ENCODE measurements at regions of chr16 and their contacts with region 1.

Region 1: GRCh38 chr16:22007509-22008214 is at the start of gene MOSMO:
- DNase-seq: peak; percentile 66 to 70
- H3K4me3 ChIP-seq: peak within 1 kb of the TSS; percentile 100
- H3K27ac ChIP-seq: peak within 1 kb of the TSS; percentile 54
- H3K4me1 ChIP-seq: peaks cover 26% of the 10 kb centered on the region
- H3K27me3 ChIP-seq: no peaks in the 10 kb centered on the region
- CTCF ChIP-seq: 0 out of 2 replicates have a peak, but pooled peaks have one; percentile 21
- total RNA-seq, gene MOSMO: 20.1 and 24.2 TPM in 2 replicates

Region 2: GRCh38 chr16:21611546-21612384 is 395.9 kb before region 1 on chr16:
- CTCF ChIA-PET with region 1: interaction called, 13 read pairs
- POLR2A ChIA-PET with region 1: no interaction called
- intact Hi-C with region 1: no loop called
- DNase-seq: peak; percentile 25 to 74
- H3K4me3 ChIP-seq: peak overlapping the region; percentile 20; the same call in 1 of the 2 replicates
- H3K27ac ChIP-seq: peak overlapping the region; percentile 81
- H3K4me1 ChIP-seq: peaks cover 74% of the 10 kb centered on the region
- H3K27me3 ChIP-seq: no peaks in the 10 kb centered on the region
- CTCF ChIP-seq: no peak

Region 3: DNA sequence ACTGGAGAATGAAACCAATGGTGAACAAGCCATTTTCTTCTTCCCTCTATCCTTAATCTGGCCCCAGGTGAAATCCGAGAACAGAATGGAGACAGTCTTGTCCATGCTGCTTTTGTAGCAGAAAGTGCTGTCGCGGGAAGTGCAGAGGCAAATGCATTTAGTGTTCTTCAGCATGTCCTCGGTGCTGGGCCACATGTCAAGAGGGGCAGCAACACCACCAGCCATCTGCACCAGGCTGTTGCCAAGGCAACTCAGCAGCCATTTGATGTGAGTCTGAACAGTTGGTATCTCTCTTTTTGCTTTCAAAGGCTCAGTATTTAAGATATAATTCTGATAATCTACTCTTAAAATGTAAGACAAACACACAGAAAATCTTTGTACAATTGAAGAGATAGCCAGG is 35.8 kb before region 1 on chr16:
- CTCF ChIA-PET with region 1: interaction called, 21 read pairs
- POLR2A ChIA-PET with region 1: no interaction called
- intact Hi-C with region 1: no loop called
- DNase-seq: no peak
- H3K4me3 ChIP-seq: no peak overlapping the region
- H3K27ac ChIP-seq: no peak overlapping the region
- H3K4me1 ChIP-seq: no peaks in the 10 kb centered on the region
- H3K27me3 ChIP-seq: no peaks in the 10 kb centered on the region
- CTCF ChIP-seq: no peak

Region 4: DNA sequence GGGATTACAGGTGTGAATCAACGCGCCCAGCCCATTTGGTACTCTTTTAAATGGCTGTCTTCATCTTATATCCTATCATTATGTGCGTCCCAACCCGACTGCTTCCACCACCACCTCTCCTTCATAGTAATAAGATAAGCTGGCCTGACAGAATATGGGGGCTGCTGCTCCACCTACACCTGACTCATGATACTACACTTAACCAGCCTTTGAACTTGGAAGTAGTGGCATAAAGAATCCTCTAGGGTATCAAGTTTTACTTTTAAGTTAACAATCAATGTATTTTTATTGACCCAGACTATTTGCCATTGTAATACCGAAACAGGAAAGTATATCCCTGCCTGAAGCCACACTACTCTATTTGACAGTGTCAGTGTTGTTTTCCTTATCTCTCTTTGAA is 25.6 kb before region 1 on chr16:
- CTCF ChIA-PET with region 1: no interaction called
- POLR2A ChIA-PET with region 1: no interaction called
- intact Hi-C with region 1: no loop called
- DNase-seq: no peak
- H3K4me3 ChIP-seq: no peak overlapping the region
- H3K27ac ChIP-seq: no peak overlapping the region
- H3K4me1 ChIP-seq: no peaks in the 10 kb centered on the region
- H3K27me3 ChIP-seq: no peaks in the 10 kb centered on the region
- CTCF ChIP-seq: no peak

Region 5: DNA sequence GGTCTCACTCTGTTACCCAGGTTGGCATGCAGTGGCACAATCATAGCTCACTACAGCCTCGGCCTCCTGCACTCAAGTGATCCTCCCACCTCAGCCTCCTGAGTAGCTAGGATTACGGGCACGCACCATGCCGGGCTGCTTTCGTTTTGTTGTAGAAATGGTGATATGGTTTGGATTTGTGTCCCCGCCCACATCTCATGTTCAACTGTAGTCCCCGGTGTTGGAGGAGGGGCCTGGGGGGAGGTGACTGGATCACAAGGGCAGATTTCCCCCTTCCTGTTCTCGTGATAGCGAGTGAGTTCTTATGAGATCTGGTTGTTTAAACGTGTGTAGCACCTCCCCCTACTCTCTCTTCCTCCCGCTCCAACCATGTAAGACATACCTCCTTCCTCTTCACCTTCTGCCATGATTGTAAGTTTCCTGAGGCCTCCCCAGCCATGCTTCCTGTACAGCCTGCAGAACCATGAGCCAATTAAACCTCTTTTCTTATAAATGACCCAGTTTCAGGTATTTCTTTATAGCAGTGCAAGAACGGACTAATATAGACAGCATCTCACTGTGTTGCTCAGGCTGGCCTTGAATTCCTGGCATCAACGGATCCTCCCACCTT is 12.7 kb before region 1 on chr16:
- CTCF ChIA-PET with region 1: no interaction called
- POLR2A ChIA-PET with region 1: no interaction called
- intact Hi-C with region 1: no loop called
- DNase-seq: no peak
- H3K4me3 ChIP-seq: no peak overlapping the region
- H3K27ac ChIP-seq: no peak overlapping the region
- H3K4me1 ChIP-seq: no peaks in the 10 kb centered on the region
- H3K27me3 ChIP-seq: no peaks in the 10 kb centered on the region
- CTCF ChIP-seq: no peak

Region 6: DNA sequence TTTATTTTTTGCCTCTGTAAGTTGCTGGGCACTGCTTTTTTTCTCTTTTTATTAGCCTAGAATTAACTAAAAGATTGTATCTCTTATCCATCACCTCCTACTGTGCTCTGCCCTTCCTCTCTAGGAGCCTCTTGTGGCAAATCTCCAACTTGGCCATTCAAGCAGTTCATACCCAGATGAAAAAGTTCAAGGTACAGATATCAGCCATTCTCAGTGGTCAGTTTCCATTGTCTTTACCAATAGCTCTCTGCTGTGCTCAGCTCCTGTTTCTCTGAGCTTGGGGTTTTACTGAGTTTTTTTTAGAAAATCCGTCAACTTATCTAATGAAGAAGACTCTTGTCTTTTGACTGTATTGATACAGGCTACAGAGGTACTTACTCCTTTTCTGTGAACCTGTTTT is 15.8 kb after region 1 on chr16:
- CTCF ChIA-PET with region 1: interaction called, 7 read pairs
- POLR2A ChIA-PET with region 1: no interaction called
- intact Hi-C with region 1: loop called (anchors 1 kb)
- DNase-seq: no peak
- H3K4me3 ChIP-seq: no peak overlapping the region
- H3K27ac ChIP-seq: 0 out of 2 replicates have a peak overlapping the region, but pooled peaks have one; percentile 20
- H3K4me1 ChIP-seq: peaks cover 52% of the 10 kb centered on the region
- H3K27me3 ChIP-seq: no peaks in the 10 kb centered on the region
- CTCF ChIP-seq: no peak

Measured in PC-9 (cell line).